Activated naive CD4-positive, alpha-beta T cell treated with anti-CD3 and anti-CD28 coated beads for 36 hours (primary cell): ENCODE measurements at regions of chr4 and their contacts with region 1.

Region 1: GRCh38 chr4:146175541-146176453 is at the start of gene LSM6:
- DNase-seq: peak; percentile 89
- H3K4me3 Mint-ChIP-seq: peak within 1 kb of the TSS; percentile 80
- H3K27ac Mint-ChIP-seq: peak within 1 kb of the TSS; percentile 90
- H3K4me1 Mint-ChIP-seq: peaks cover 48% of the 10 kb centered on the region
- H3K27me3 Mint-ChIP-seq: no peaks in the 10 kb centered on the region
- total RNA-seq, gene LSM6: 62.9 to 65.8 TPM

Region 2: GRCh38 chr4:145487631-145488030 is 688.2 kb before region 1 on chr4:
- CTCF ChIA-PET with region 1: no interaction called
- intact Hi-C with region 1: loop called (anchors 5 kb)
- DNase-seq: peak; percentile 55
- H3K4me3 Mint-ChIP-seq: no peak overlapping the region
- H3K27ac Mint-ChIP-seq: no peak overlapping the region
- H3K4me1 Mint-ChIP-seq: peaks cover 5% of the 10 kb centered on the region
- H3K27me3 Mint-ChIP-seq: peaks cover 14% of the 10 kb centered on the region

Region 3: DNA sequence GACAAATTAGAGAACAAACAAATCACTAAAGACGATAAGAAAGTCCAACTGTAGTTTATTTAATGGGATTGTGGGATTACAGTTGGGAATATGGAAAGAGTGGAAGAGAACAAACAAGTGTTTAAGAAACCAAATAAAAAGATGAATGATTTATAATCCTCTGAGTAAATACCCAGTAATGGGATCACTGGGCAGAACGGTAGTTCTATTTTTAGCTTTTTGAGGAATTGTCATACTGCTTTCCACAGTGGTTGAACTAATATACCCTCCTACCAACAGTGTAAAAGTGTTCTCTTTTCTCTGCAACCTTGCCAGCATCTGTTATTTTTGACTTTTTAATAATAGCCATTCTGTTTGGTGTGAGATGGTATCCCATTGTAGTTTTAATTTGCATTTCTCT is 480.9 kb before region 1 on chr4:
- CTCF ChIA-PET with region 1: no interaction called
- intact Hi-C with region 1: no loop called
- DNase-seq: no peak
- H3K4me3 Mint-ChIP-seq: no peak overlapping the region
- H3K27ac Mint-ChIP-seq: no peak overlapping the region
- H3K4me1 Mint-ChIP-seq: no peaks in the 10 kb centered on the region
- H3K27me3 Mint-ChIP-seq: no peaks in the 10 kb centered on the region

Region 4: GRCh38 chr4:145808021-145808650 is 367.7 kb before region 1 on chr4:
- CTCF ChIA-PET with region 1: no interaction called
- intact Hi-C with region 1: loop called (anchors 1 kb)
- DNase-seq: peak; percentile 74
- H3K4me3 Mint-ChIP-seq: peak overlapping the region; percentile 46
- H3K27ac Mint-ChIP-seq: peak overlapping the region; percentile 91
- H3K4me1 Mint-ChIP-seq: peaks cover 44% of the 10 kb centered on the region
- H3K27me3 Mint-ChIP-seq: no peaks in the 10 kb centered on the region

Region 5: DNA sequence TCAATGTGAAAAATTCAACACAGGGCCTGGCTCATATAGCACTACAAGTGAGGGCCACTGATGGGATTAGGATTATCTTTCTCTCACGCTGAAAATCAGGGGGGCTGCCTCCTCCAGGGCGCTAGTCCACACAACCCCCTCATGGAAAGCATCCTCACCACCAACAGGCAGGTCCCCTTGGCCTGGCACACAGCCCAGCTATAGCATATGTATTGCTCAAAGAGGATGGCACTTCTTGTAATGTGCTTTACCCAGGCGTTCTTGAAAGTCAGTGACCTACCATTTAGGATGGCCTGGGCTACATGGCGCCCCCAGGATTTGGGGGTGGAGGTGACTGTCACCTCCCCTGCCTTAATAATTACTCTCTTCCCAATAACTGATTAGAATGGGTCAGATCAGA is 71.3 kb before region 1 on chr4:
- CTCF ChIA-PET with region 1: no interaction called
- intact Hi-C with region 1: loop called (anchors 5 kb)
- DNase-seq: no peak
- H3K4me3 Mint-ChIP-seq: no peak overlapping the region
- H3K27ac Mint-ChIP-seq: no peak overlapping the region
- H3K4me1 Mint-ChIP-seq: no peaks in the 10 kb centered on the region
- H3K27me3 Mint-ChIP-seq: no peaks in the 10 kb centered on the region

Region 6: GRCh38 chr4:146191766-146192458 is 16.1 kb after region 1 on chr4:
- CTCF ChIA-PET with region 1: no interaction called
- intact Hi-C with region 1: no loop called
- DNase-seq: no peak
- H3K4me3 Mint-ChIP-seq: no peak overlapping the region
- H3K27ac Mint-ChIP-seq: no peak overlapping the region
- H3K4me1 Mint-ChIP-seq: no peaks in the 10 kb centered on the region
- H3K27me3 Mint-ChIP-seq: no peaks in the 10 kb centered on the region

Region 7: DNA sequence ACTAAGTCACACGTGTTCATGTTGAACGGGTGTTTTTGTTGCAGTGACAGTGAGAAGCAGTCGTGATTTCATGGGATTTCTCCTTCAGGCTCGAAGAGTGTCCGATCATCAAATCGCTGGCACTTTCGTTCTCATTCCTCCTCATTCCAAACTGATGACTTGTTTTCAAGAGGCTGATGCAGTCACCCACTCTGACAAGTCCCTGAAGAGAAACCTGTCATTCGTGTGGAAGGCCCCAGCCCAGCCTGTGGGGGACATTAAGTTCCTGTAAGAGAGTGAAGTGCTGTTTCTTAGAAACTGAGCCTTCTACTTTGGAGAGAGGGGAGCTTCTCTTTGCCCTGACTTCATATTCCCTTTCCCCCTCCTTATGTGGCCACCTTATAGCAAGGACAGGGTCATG is 46.5 kb after region 1 on chr4:
- CTCF ChIA-PET with region 1: no interaction called
- intact Hi-C with region 1: no loop called
- DNase-seq: no peak
- H3K4me3 Mint-ChIP-seq: no peak overlapping the region
- H3K27ac Mint-ChIP-seq: no peak overlapping the region
- H3K4me1 Mint-ChIP-seq: no peaks in the 10 kb centered on the region
- H3K27me3 Mint-ChIP-seq: no peaks in the 10 kb centered on the region

Region 8: DNA sequence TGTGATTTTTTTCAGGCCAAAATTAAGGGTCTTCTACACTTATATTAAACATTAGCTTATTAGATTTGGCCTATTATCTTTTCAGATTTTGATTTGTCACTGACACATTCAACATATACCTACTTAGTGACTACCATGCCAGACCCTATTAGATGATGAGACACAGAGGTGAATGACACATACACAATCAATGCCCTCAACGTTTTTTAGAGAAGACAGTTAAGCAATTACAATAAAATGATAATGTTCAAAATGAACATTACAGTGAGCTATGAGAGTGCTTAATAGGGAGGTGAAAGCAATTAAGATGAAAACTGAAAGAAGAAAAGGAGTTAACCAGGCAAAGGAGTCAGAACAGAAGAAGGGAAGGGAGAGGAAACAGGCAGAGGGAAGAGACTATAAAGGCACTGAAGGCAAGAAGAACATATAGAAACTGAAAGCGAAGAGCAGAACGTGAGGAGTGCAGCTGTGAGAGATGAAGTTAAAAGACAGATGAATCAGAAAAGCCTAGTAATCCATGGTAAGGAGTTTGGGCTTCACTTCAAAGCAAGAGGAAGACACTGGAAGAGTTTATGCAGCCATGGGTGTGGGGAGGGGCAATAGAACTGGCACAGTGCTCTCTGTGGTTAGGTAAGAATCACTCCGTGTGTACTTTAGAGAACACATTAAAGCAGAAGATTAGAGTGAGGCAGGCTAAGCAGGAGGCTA is 157.5 kb after region 1 on chr4:
- CTCF ChIA-PET with region 1: no interaction called
- intact Hi-C with region 1: loop called (anchors 5 kb)
- DNase-seq: peak; percentile 41
- H3K4me3 Mint-ChIP-seq: no peak overlapping the region
- H3K27ac Mint-ChIP-seq: no peak overlapping the region
- H3K4me1 Mint-ChIP-seq: peaks cover 7% of the 10 kb centered on the region
- H3K27me3 Mint-ChIP-seq: no peaks in the 10 kb centered on the region

Region 9: DNA sequence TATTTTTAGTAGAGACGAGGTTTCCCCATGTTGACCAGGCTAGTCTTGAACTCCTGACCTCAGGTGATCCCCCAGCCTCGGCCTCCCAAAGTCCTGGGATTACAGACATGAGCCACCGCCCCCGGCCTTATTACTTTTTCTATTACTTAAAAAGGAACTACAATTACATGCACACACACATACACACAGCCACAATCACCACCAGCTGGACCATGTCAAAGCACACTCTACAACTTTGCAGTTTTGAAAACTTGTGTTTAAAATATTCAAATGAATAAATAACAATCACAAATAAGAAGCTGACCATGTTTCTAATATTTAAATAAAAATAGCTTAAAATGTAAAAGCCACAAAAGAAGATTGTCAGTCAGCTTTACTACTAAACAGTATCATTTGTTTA is 322.5 kb after region 1 on chr4:
- CTCF ChIA-PET with region 1: no interaction called
- intact Hi-C with region 1: no loop called
- DNase-seq: no peak
- H3K4me3 Mint-ChIP-seq: no peak overlapping the region
- H3K27ac Mint-ChIP-seq: no peak overlapping the region
- H3K4me1 Mint-ChIP-seq: peaks cover 16% of the 10 kb centered on the region
- H3K27me3 Mint-ChIP-seq: no peaks in the 10 kb centered on the region